HepG2 (cell line): ENCODE measurements at regions of chr17 and their contacts with region 1.

Region 1: GRCh38 chr17:75632863-75633485 is at the start of gene SMIM5:
- DNase-seq: peak; percentile 74
- ATAC-seq: peak; percentile 87
- H3K4me3 ChIP-seq: peak within 1 kb of the TSS in 2 of 3 experiments; percentile 21 to 59; a peak in 2 of 6 replicates
- H3K27ac ChIP-seq: peak within 1 kb of the TSS; percentile 50
- H3K4me1 ChIP-seq: peaks cover 19% of the 10 kb centered on the region
- H3K27me3 ChIP-seq: no peaks in the 10 kb centered on the region
- CTCF ChIP-seq: peak; percentile 97
- EP300 ChIP-seq: no peak
- POLR2A ChIP-seq: no peak
- RAD21 ChIP-seq: peak; percentile 93
- total RNA-seq, gene SMIM5: not detected in 2 replicates

Region 2: GRCh38 chr17:75557075-75557882 is 75.7 kb before region 1 on chr17:
- CTCF ChIA-PET with region 1: no interaction called
- POLR2A ChIA-PET with region 1: no interaction called
- in situ Hi-C with region 1: no loop called
- intact Hi-C with region 1: no loop called
- DNase-seq: peak; percentile 98
- ATAC-seq: peak; percentile 89
- H3K4me3 ChIP-seq: peak overlapping the region; percentile 32 to 69 (median 39)
- H3K27ac ChIP-seq: peak overlapping the region; percentile 81
- H3K4me1 ChIP-seq: peaks cover 90% of the 10 kb centered on the region
- H3K27me3 ChIP-seq: no peaks in the 10 kb centered on the region
- CTCF ChIP-seq: peak; percentile 50
- EP300 ChIP-seq: peak in 1 of 2 experiments; percentile 80; a peak in 2 of 4 replicates
- POLR2A ChIP-seq: peak; percentile 50 to 81; a peak in 3 of 4 replicates
- RAD21 ChIP-seq: peak; percentile 62

Region 3: GRCh38 chr17:75619506-75620431 is 13.2 kb before region 1 on chr17:
- CTCF ChIA-PET with region 1: no interaction called
- POLR2A ChIA-PET with region 1: interaction called, 12 read pairs
- in situ Hi-C with region 1: no loop called
- intact Hi-C with region 1: no loop called
- DNase-seq: peak; percentile 39
- ATAC-seq: peak; percentile 66
- H3K4me3 ChIP-seq: no peak overlapping the region
- H3K27ac ChIP-seq: no peak overlapping the region
- H3K4me1 ChIP-seq: peaks cover 12% of the 10 kb centered on the region
- H3K27me3 ChIP-seq: no peaks in the 10 kb centered on the region
- CTCF ChIP-seq: peak; percentile 86
- EP300 ChIP-seq: no peak
- POLR2A ChIP-seq: no peak
- RAD21 ChIP-seq: peak; percentile 49

Region 4: DNA sequence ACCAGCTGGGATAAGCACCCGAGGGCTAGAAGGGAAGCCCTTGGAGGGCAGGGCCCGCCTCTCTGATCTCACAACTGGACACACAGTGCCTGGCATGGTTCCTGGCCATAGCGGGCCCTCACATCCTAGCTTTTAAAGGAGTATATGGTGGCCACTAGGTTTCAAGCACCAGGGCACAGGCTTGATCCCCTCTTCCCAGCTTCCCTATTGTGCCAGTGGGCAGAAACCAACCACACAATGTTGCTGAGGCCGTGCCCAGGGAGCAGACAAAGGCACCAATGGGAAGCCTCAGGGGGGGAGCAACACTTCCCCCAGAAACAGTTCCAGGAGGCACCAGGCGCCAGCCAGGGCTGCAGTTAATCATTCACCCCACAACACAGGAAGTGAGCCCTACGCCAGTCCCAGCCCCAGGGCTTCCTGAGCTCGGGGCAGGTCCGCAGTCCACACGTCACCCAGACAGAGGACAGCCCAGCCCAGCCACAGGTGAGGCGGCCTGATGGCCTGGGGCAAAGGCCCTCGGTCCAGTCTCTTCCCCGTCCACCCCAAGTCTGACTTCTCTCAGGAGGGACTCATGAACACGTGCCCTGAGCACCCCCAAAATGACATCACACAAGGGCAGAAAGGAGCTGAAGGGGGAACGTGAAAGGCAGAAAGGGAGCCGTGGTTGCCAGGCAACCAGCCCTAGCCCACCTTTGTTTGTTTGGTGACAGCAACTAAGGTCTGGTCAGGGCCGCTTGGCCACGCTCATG is 13.1 kb after region 1 on chr17:
- CTCF ChIA-PET with region 1: interaction called, 6 read pairs
- POLR2A ChIA-PET with region 1: interaction called, 28 read pairs
- in situ Hi-C with region 1: no loop called
- intact Hi-C with region 1: loop called (anchors 1 kb)
- DNase-seq: peak; percentile 96
- ATAC-seq: peak; percentile 100
- H3K4me3 ChIP-seq: peak overlapping the region; percentile 45 to 67 (median 48); a peak in 5 of 6 replicates
- H3K27ac ChIP-seq: peak overlapping the region; percentile 85
- H3K4me1 ChIP-seq: peaks cover 25% of the 10 kb centered on the region
- H3K27me3 ChIP-seq: no peaks in the 10 kb centered on the region
- CTCF ChIP-seq: peak; percentile 52
- EP300 ChIP-seq: no peak
- POLR2A ChIP-seq: peak; percentile 90 to 93
- RAD21 ChIP-seq: no peak

Region 5: GRCh38 chr17:75652915-75653549 is 20.1 kb after region 1 on chr17:
- CTCF ChIA-PET with region 1: interaction called, 28 read pairs
- POLR2A ChIA-PET with region 1: interaction called, 4 read pairs
- in situ Hi-C with region 1: no loop called
- intact Hi-C with region 1: loop called (anchors 1 kb)
- DNase-seq: peak; percentile 59
- ATAC-seq: peak; percentile 94
- H3K4me3 ChIP-seq: no peak overlapping the region
- H3K27ac ChIP-seq: no peak overlapping the region
- H3K4me1 ChIP-seq: peaks cover 4% of the 10 kb centered on the region; the same call in 1 of the 2 replicates
- H3K27me3 ChIP-seq: no peaks in the 10 kb centered on the region
- CTCF ChIP-seq: peak; percentile 90
- EP300 ChIP-seq: no peak
- POLR2A ChIP-seq: no peak
- RAD21 ChIP-seq: peak; percentile 76

Region 6: DNA sequence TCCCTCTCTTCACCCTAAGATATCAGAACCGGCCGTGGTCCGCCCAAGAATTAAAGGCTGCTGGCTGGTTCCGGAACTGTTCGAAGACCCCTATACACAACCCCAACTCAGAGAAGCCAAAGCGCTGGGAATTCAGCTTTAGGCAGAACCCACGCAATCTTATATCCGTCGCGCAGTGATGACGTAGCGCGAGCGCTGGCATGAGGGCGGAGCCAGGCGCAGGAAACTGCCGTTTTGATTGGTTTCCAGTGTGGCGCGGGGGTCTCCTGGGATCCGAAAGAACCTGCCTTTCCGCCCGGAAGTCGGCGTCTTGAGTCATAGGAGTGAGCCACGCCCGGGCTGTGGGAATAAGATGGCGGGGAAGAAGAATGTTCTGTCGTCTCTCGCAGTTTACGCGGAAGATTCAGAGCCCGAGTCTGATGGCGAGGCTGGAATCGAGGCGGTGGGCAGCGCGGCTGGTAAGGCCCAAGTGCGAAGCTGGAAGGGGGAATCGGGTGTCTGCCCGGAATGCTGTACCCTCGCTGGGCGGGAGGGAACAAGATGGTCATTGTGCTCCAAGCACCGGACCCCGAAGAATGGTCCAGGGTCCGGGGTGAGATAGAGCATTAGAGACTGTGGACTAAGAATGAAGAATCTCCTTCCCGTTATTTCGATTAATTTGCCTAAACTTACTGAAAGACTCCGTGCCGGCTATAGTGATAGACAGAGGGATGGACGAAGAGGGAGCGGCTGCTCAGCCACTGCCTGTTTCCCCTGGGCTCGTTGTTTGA is 34.2 kb after region 1 on chr17 and contains the starts of genes RECQL5 and SAP30BP:
- CTCF ChIA-PET with region 1: interaction called, 3 read pairs
- POLR2A ChIA-PET with region 1: interaction called, 8 read pairs
- in situ Hi-C with region 1: no loop called
- intact Hi-C with region 1: loop called (anchors 1 kb)
- DNase-seq: peak; percentile 98
- ATAC-seq: peak; percentile 100
- H3K4me3 ChIP-seq: peak within 1 kb of the TSS; percentile 77 to 99 (median 99)
- H3K27ac ChIP-seq: peak within 1 kb of the TSS; percentile 73
- H3K4me1 ChIP-seq: peaks cover 39% of the 10 kb centered on the region
- H3K27me3 ChIP-seq: peaks cover 0 to 5% of the 10 kb centered on the region in 2 experiments; a peak in 1 of 5 replicates
- CTCF ChIP-seq: 0 out of 2 replicates have a peak, but pooled peaks have one; percentile 15
- EP300 ChIP-seq: 0 out of 4 replicates have a peak, but pooled peaks of 1 of the 2 experiments have one; percentile 28
- POLR2A ChIP-seq: peak; percentile 82 to 91
- RAD21 ChIP-seq: 0 out of 2 replicates have a peak, but pooled peaks have one; percentile 10
- total RNA-seq, gene RECQL5: 17.8 and 32.0 TPM in 2 replicates
- total RNA-seq, gene SAP30BP: 99.4 and 109 TPM in 2 replicates

Region 7: DNA sequence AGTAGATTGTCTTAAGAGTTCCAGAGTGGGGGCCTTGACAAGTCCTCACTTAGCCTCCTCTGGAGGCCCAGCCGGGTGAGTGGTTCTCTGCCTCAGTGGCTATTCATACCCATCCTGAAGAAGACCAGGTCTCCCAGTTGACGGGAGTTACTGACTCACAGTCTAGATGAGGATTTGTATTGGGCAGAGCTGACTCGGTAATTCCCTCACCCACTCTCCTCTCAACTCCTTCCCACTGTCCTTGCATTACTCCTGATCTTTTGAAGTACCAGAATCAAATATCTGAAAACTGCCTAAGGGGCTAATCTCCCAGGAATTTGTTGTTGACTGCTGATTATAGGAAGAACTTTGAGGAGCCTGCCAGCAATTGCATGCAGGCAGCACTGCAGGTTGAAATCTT is 48.3 kb after region 1 on chr17:
- CTCF ChIA-PET with region 1: no interaction called
- POLR2A ChIA-PET with region 1: no interaction called
- in situ Hi-C with region 1: no loop called
- intact Hi-C with region 1: no loop called
- DNase-seq: no peak
- ATAC-seq: no peak
- H3K4me3 ChIP-seq: no peak overlapping the region
- H3K27ac ChIP-seq: no peak overlapping the region
- H3K4me1 ChIP-seq: peaks cover 16% of the 10 kb centered on the region
- H3K27me3 ChIP-seq: no peaks in the 10 kb centered on the region
- CTCF ChIP-seq: no peak
- EP300 ChIP-seq: no peak
- POLR2A ChIP-seq: no peak
- RAD21 ChIP-seq: no peak

Region 8: GRCh38 chr17:75707131-75707571 is 74.2 kb after region 1 on chr17:
- CTCF ChIA-PET with region 1: no interaction called
- POLR2A ChIA-PET with region 1: no interaction called
- in situ Hi-C with region 1: no loop called
- intact Hi-C with region 1: no loop called
- DNase-seq: no peak
- ATAC-seq: no peak
- H3K4me3 ChIP-seq: no peak overlapping the region
- H3K27ac ChIP-seq: no peak overlapping the region
- H3K4me1 ChIP-seq: no peaks in the 10 kb centered on the region
- H3K27me3 ChIP-seq: no peaks in the 10 kb centered on the region
- CTCF ChIP-seq: no peak
- EP300 ChIP-seq: no peak
- POLR2A ChIP-seq: no peak
- RAD21 ChIP-seq: no peak

Region 9: DNA sequence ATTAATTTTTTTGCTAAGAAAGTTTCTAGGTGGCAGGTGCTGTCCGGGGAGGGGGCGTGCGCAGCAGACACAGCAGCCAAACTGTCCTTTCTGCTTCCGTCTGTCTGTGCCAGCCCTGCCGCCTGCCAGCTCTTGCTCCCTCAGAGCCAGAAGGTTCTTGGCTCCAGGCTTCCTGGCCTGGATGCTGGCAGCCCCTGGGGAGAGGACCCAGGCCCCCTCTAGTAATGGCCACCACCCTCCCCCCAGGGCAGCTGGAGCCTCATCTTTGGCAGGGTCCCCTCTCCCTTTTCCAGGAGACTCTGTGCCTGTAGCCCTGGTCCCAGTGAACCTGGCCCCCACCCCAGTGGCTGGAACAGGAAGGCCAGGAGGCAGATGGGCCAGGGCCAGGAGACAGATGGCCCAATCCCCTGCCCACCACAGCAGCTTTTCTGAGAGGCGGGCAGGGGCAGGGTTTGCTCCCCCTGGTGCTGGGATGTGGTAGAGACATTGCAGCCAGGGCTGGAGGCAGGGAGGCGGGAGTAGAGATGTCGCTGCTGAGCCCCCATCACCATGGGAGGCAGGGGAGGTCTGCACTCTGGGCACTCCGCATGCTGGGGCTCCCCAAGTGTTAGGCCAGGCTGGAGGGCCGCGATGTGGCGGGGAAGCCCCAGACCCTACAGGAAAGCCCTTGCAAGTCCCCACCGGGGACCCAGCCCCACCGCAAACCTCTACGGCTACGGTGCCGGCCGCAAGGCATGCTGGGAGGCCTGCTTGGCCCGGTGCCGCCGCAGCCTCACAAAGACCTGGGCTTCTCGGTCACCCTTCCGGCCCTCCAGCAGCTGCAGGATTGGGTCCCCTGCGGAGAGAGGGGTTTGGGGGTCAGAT is 194.5 kb after region 1 on chr17:
- CTCF ChIA-PET with region 1: no interaction called
- POLR2A ChIA-PET with region 1: no interaction called
- in situ Hi-C with region 1: no loop called
- intact Hi-C with region 1: no loop called
- DNase-seq: peak; percentile 50
- ATAC-seq: peak; percentile 73
- H3K4me3 ChIP-seq: no peak overlapping the region
- H3K27ac ChIP-seq: peak overlapping the region; percentile 61
- H3K4me1 ChIP-seq: peaks cover 22% of the 10 kb centered on the region
- H3K27me3 ChIP-seq: no peaks in the 10 kb centered on the region
- CTCF ChIP-seq: peak; percentile 87
- EP300 ChIP-seq: no peak
- POLR2A ChIP-seq: no peak
- RAD21 ChIP-seq: peak; percentile 74